ENCODE measurements at regions of chr4 and their contacts with region 1.

Region 1: DNA sequence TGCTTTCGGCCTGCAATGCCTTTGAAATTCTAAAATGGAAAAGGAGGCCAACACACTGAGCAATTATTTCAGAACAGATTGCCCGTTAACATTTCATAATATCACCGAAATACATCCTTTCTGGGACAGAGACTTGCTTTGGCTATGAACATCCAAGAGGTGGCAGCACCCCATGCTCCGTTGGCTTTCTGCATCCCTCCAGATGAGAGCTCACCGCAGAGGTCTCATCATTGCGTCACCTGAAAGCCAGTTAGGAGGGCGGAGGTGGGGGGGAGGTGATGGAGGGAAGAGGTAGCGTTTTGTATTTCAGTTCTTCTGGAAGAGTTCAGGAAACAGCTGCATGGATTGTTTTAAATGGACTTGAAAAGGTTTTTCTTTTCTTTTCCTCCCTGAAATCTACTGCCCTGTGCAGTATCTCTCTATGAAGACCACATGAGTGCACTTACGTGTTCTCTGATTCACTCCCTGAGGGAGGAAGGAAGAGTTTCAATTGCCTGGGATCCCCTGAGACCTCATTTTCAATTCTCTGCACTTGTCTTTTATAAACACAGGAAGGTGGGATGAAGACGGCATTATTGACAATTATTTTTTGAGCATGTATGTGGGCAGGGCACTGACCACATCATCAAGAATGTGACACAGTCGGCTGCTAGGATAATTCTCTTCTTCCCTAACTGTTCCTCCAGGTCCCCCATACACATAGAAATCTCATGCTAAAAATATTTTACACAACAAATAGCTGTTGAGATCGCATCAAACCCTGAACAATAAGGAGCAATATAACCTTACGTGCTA is 166.9 kb upstream of the PGRMC2 start:
- DNase-seq: peak; percentile 83
- H3K4me3 ChIP-seq: no peak overlapping the region
- H3K27ac ChIP-seq: no peak overlapping the region
- H3K4me1 ChIP-seq: peaks cover 14% of the 10 kb centered on the region
- H3K27me3 ChIP-seq: no peaks in the 10 kb centered on the region
- CTCF ChIP-seq: peak; percentile 88 to 93

Region 2: GRCh38 chr4:128553686-128554515 is 99.4 kb after region 1 on chr4:
- CTCF ChIA-PET with region 1: interaction called, 12 read pairs
- dilution Hi-C with region 1: no loop called
- in situ Hi-C with region 1: no loop called
- intact Hi-C with region 1: loop called (anchors 1 kb)
- DNase-seq: no peak
- H3K4me3 ChIP-seq: peak overlapping the region; percentile 57 to 60 (median 59)
- H3K27ac ChIP-seq: peak overlapping the region; percentile 60
- H3K4me1 ChIP-seq: peaks cover 6% of the 10 kb centered on the region
- H3K27me3 ChIP-seq: no peaks in the 10 kb centered on the region
- CTCF ChIP-seq: no peak

Region 3: DNA sequence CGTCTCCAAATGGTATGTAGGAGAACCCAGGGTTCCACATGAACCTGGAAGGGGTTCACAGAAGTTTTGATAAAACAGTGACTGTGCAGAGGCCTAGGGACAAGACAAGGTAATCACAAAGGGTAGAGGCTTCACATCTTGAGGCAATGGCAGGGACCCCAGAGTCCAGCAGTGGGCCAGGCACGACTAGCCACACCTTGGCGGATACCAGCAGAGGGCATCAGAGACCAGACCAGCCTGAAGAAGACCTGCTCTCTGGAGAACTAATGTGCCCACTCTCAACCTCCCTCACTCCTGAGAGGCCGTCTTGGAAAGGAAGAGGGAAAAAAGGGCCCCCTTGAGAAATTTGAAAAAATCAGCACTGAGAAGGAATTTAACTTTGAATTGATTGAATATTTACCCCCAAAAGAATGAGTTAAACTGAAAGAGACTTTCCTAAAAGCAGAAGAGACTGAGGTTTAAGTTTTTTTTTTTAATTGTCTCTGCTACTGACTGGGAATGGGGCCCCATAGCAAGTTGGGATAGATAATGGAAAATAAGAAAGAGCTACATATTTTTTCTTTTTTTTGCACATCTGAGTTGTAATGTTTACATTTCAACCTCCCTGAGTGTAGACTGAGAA is 111.2 kb after region 1 on chr4:
- CTCF ChIA-PET with region 1: no interaction called
- dilution Hi-C with region 1: no loop called
- in situ Hi-C with region 1: no loop called
- intact Hi-C with region 1: loop called (anchors 2 kb)
- DNase-seq: no peak
- H3K4me3 ChIP-seq: no peak overlapping the region
- H3K27ac ChIP-seq: no peak overlapping the region
- H3K4me1 ChIP-seq: peaks cover 6% of the 10 kb centered on the region
- H3K27me3 ChIP-seq: no peaks in the 10 kb centered on the region
- CTCF ChIP-seq: peak; percentile 37 to 70

Region 4: GRCh38 chr4:128574706-128575105 is 120.2 kb after region 1 on chr4:
- CTCF ChIA-PET with region 1: no interaction called
- dilution Hi-C with region 1: no loop called
- in situ Hi-C with region 1: no loop called
- intact Hi-C with region 1: loop called (anchors 1 kb)
- DNase-seq: peak; percentile 47
- H3K4me3 ChIP-seq: no peak overlapping the region
- H3K27ac ChIP-seq: no peak overlapping the region
- H3K4me1 ChIP-seq: peaks cover 30% of the 10 kb centered on the region
- H3K27me3 ChIP-seq: no peaks in the 10 kb centered on the region
- CTCF ChIP-seq: peak; percentile 64 to 79

Region 5: DNA sequence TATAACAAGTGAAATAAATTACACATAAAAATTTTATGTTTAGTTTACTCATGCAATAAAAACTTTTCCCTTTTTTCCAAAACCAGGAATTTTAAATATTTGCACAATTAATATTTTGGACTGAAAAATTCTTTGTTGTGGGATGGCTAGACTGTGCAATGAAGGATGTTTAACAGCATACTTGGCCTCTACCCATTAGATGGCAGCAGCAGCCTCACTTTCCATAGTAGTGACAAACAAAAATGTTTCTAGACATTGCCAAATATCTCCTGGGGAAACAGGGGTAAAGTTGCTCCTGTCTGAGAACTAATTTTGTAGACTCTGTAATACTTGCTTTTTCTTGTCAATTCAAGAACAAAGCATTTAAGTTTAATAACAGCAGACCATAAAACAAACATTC is 589.0 kb after region 1 on chr4:
- CTCF ChIA-PET with region 1: no interaction called
- dilution Hi-C with region 1: no loop called
- in situ Hi-C with region 1: no loop called
- intact Hi-C with region 1: no loop called
- DNase-seq: no peak
- H3K4me3 ChIP-seq: no peak overlapping the region
- H3K27ac ChIP-seq: no peak overlapping the region
- H3K4me1 ChIP-seq: no peaks in the 10 kb centered on the region
- H3K27me3 ChIP-seq: no peaks in the 10 kb centered on the region
- CTCF ChIP-seq: peak in 1 of 2 donors; percentile 42

Region 6: DNA sequence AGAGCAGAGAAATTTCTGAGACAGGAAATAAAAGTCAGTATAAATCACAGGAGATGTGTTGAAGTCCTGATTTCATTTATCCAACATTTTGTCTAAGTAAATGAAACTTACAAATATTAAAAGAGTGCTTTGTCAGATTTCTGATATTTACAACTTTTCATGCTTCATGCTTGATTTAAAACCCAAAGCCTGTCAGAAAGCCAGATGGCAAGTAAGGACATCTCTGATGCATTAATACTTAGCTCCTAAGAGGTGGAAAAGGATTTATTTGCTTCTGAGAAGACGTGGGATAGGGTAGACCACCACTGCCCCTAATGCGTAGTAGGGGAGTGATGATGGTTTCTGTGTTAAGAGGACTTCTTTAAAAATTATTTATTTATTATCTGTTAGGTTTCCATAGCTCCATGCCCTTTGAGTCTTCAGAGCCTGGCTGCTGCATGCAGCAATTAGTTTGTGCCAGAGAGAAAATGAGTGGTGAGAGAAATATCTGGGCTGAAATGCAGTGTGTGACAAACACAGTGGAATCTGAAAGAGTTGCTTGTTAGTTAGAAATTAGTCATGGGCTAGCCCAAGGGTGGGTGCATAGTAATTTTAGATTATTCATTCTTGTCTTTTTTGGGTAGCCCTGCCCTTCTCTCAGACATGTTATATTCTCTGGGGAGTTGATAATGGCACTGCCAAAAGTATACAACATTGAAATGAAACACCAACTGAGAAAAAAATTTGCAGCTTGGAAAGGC is 975.3 kb after region 1 on chr4:
- CTCF ChIA-PET with region 1: no interaction called
- dilution Hi-C with region 1: no loop called
- in situ Hi-C with region 1: no loop called
- intact Hi-C with region 1: no loop called
- DNase-seq: peak; percentile 19
- H3K4me3 ChIP-seq: no peak overlapping the region
- H3K27ac ChIP-seq: no peak overlapping the region
- H3K4me1 ChIP-seq: no peaks in the 10 kb centered on the region
- H3K27me3 ChIP-seq: no peaks in the 10 kb centered on the region
- CTCF ChIP-seq: no peak